ENCODE measurements at regions of chr1 and their contacts with region 1.

Region 1: GRCh38 chr1:198359024-198359653 is 181.3 kb downstream of the ATP6V1G3 start:
- DNase-seq: no peak
- ATAC-seq: no peak

Region 2: DNA sequence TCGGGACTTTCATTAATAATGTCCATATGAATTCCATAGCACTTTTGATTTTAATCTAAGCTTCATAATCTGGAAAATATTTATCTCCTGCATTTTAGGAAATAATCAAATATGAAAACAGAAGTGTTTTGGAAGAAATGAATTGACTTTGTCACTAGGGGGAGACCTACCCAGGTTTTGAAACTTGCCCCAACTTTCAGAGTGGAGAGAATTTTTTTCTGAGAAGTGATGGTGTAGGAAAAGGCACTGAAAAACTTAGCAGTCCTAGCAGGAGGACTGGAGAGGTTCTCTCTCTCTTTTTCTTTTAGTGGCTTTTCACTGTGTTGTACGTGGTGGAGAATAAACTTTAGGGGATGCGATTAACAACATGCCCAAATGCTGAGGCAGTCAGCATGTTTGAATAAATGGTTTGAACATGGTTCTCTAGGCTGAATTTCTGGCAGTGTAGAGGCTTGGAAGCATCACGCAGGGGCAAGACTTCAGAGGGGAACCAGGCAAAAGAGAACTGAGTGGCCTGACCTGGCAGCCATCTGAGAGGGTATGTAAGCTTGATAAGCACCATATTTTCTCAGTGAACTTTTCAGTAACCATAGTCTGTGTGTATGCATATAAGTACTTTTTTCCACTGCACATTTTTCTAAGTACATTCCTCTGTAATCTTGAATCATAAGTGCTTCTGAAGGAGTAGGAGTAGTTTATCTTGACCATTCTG is 270.6 kb before region 1 on chr1:
- intact Hi-C with region 1: loop called (anchors 2 kb)
- DNase-seq: no peak
- ATAC-seq: no peak

Region 3: DNA sequence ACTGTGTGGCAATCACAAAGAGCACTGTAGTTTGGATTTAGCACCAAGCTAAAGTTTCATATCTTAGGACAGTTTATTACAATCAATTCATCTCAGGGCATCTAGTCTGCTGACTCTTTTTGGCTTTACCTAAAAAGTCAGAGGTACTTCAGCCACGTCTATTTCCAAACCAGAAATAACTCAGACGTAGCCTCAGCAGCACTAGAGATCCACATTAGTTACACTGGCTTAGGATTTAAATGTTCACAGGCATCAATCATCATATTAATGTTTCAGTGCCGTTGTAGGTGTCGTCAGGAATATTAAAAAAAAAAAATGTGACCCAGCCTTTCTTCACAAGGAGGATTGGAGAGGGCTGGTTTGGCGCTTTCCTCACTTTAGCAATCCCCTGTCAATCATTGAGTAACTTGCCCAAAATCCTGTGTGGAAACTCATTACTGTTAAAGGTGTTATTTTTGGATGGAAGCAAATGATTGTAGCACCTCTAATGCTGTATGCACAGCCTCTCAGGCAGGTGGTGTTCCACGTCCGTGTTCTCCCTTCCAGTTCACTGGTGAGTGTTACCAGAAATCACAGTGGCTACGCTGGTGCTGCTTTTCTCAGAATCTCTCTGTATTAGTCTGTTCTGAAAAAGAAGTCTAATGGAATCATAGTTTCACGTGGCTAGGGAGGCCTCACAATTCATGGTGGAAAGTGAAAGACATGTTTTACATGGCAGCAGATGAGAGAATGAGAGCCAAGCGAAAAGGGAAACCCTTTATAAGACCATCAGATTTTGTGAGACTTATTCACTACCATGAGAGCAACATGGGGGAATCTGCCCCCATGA is 157.0 kb before region 1 on chr1:
- intact Hi-C with region 1: loop called (anchors 5 kb)
- DNase-seq: no peak
- ATAC-seq: no peak

Region 4: GRCh38 chr1:199002661-199003060 is 643.5 kb after region 1 on chr1:
- intact Hi-C with region 1: no loop called
- DNase-seq: no peak
- ATAC-seq: no peak

Measured in Right ventricle myocardium inferior (tissue), 1 donor.